ENCODE measurements at regions of chr10 and their contacts with region 1.

Region 1: GRCh38 chr10:103671122-103671895 is 177.8 kb downstream of the NEURL1 start:
- DNase-seq: no peak
- H3K4me3 ChIP-seq: no peak overlapping the region
- H3K27ac ChIP-seq: no peak overlapping the region
- H3K4me1 ChIP-seq: peaks cover 4 to 9% of the 10 kb centered on the region in 2 donors
- H3K27me3 ChIP-seq: no peaks in the 10 kb centered on the region
- CTCF ChIP-seq: no peak
- POLR2A ChIP-seq: no peak

Region 2: GRCh38 chr10:103621783-103622125 is 49.6 kb before region 1 on chr10:
- intact Hi-C with region 1: loop called (anchors 2 kb)
- DNase-seq: no peak
- H3K4me3 ChIP-seq: no peak overlapping the region
- H3K27ac ChIP-seq: peak overlapping the region; percentile 60 to 80
- H3K4me1 ChIP-seq: peaks cover 0 to 32% of the 10 kb centered on the region in 2 donors
- H3K27me3 ChIP-seq: no peaks in the 10 kb centered on the region
- CTCF ChIP-seq: no peak
- POLR2A ChIP-seq: no peak

Region 3: DNA sequence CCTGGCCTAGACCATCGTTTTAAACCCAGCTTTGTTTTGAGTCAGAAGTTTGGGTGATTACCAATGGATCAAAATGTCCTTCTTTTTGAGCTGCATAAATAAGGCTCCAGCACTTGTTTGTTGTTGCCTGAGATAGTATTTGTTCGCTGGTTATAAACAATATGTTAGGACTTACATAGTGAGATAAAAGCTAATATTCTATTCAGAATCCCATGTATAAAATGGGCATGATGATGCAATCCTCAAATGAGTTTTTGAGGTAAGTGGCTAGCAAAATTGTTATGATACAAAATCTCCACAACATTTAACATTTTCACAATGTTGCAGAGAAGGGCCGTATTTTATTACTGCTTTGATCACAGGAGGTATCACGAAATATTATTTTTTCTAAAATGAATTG is 512.4 kb after region 1 on chr10:
- intact Hi-C with region 1: no loop called
- DNase-seq: no peak
- H3K4me3 ChIP-seq: no peak overlapping the region
- H3K27ac ChIP-seq: no peak overlapping the region
- H3K4me1 ChIP-seq: no peaks in the 10 kb centered on the region
- H3K27me3 ChIP-seq: no peaks in the 10 kb centered on the region
- CTCF ChIP-seq: no peak
- POLR2A ChIP-seq: no peak

Region 4: GRCh38 chr10:104417637-104418296 is 746.5 kb after region 1 on chr10:
- intact Hi-C with region 1: no loop called
- DNase-seq: no peak
- H3K4me3 ChIP-seq: no peak overlapping the region
- H3K27ac ChIP-seq: no peak overlapping the region
- H3K4me1 ChIP-seq: no peaks in the 10 kb centered on the region
- H3K27me3 ChIP-seq: no peaks in the 10 kb centered on the region
- CTCF ChIP-seq: no peak
- POLR2A ChIP-seq: no peak

Measured in breast epithelium (tissue), 4 donors.